CD4-positive, alpha-beta T cell (primary cell): ENCODE measurements at regions of chr12 and their contacts with region 1.

Region 1: GRCh38 chr12:49043856-49044258 is 16.7 kb downstream of the KMT2D start:
- DNase-seq: peak; percentile 68 to 88 (median 81)
- ATAC-seq: peak; percentile 95
- H3K4me3 ChIP-seq: no peak overlapping the region
- H3K4me3 Mint-ChIP-seq: no peak overlapping the region
- H3K27ac ChIP-seq: no peak overlapping the region
- H3K27ac Mint-ChIP-seq: peak overlapping the region; percentile 52
- H3K4me1 ChIP-seq: peaks cover 11% of the 10 kb centered on the region
- H3K4me1 Mint-ChIP-seq: peaks cover 6% of the 10 kb centered on the region
- H3K27me3 ChIP-seq: no peaks in the 10 kb centered on the region
- H3K27me3 Mint-ChIP-seq: no peaks in the 10 kb centered on the region
- CTCF ChIP-seq: peak; percentile 74

Region 2: GRCh38 chr12:49024543-49024942 is 19.3 kb before region 1 on chr12:
- CTCF ChIA-PET with region 1: interaction called, 9 read pairs
- POLR2A ChIA-PET with region 1: interaction called, 3 read pairs
- intact Hi-C with region 1: loop called in 1 of 2 experiments (anchors 2 kb)
- DNase-seq: peak in 1 of 14 experiments; percentile 16
- ATAC-seq: no peak
- H3K4me3 ChIP-seq: no peak overlapping the region
- H3K4me3 Mint-ChIP-seq: no peak overlapping the region
- H3K27ac ChIP-seq: no peak overlapping the region
- H3K27ac Mint-ChIP-seq: peak overlapping the region; percentile 74
- H3K4me1 ChIP-seq: peaks cover 6% of the 10 kb centered on the region
- H3K4me1 Mint-ChIP-seq: peaks cover 6% of the 10 kb centered on the region
- H3K27me3 ChIP-seq: no peaks in the 10 kb centered on the region
- H3K27me3 Mint-ChIP-seq: no peaks in the 10 kb centered on the region
- CTCF ChIP-seq: no peak